Heart left ventricle (tissue), 16 donors: ENCODE measurements at regions of chr19 and their contacts with region 1.

Region 1: GRCh38 chr19:48506138-48506733 is 5.4 kb downstream of the LMTK3 start:
- DNase-seq: no peak
- ATAC-seq: peak in 1 of 4 donors; percentile 17
- H3K4me3 ChIP-seq: no peak overlapping the region
- H3K27ac ChIP-seq: no peak overlapping the region
- H3K4me1 ChIP-seq: peaks cover 0 to 14% (median 3%) of the 10 kb centered on the region in 12 donors
- H3K27me3 ChIP-seq: peaks cover 4 to 34% (median 15%) of the 10 kb centered on the region in 9 donors
- CTCF ChIP-seq: peak; percentile 9 to 47 (median 33)
- POLR2A ChIP-seq: no peak

Region 2: DNA sequence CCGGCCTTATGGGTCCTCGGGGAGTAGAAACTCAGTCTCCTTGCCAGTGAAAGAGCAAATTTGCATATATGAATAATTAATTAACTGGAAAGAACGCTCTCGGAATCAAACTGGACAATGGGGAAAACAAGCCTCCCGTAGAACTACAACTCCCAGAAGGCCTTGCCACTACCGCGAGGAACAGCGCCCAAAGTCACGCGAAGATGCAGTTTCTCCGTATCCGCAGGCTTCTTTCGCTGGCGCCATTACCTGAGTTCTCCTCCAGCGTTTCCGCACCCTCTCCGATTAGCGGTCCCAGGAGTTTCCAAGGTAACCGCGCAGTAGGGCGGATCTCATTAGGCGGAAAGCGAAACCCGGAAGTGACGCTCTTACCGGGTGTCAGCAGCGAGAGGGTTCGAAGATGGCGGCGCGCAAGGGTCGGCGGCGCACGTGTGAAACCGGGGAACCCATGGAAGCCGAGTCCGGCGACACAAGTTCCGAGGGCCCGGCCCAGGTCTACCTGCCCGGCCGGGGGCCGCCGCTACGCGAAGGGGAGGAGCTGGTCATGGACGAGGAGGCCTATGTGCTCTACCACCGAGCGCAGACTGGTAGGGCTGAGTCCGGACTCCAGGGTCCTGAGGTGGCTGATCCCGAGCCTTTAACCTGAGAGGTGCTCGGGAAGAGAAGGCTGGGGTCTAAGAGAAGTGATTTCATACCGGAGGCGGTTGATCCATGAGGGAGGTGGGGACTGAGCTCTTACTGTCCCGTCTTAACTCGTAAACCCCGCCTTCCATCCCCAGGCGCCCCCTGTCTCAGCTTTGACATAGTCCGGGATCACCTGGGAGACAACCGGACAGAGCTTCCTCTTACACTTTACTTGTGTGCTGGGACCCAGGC is 60.4 kb before region 1 on chr19 and contains the start of gene GRWD1:
- intact Hi-C with region 1: no loop called
- DNase-seq: peak; percentile 88 to 93 (median 91)
- ATAC-seq: peak; percentile 88 to 95 (median 91)
- H3K4me3 ChIP-seq: peak within 1 kb of the TSS; percentile 60 to 98 (median 89)
- H3K27ac ChIP-seq: peak within 1 kb of the TSS; percentile 12 to 94 (median 88)
- H3K4me1 ChIP-seq: peaks cover 0 to 27% (median 19%) of the 10 kb centered on the region in 12 donors
- H3K27me3 ChIP-seq: peaks cover 4 to 28% (median 15%) of the 10 kb centered on the region in 9 donors
- CTCF ChIP-seq: peak in 2 of 12 donors; percentile 3 to 7
- POLR2A ChIP-seq: peak in 1 of 2 donors; percentile 47
- total RNA-seq, gene GRWD1: 13.9 to 24.7 (median 19.0) TPM

Region 3: GRCh38 chr19:48466561-48467335 is 39.5 kb before region 1 on chr19:
- intact Hi-C with region 1: no loop called
- DNase-seq: peak in 1 of 5 donors; percentile 47
- ATAC-seq: no peak
- H3K4me3 ChIP-seq: no peak overlapping the region
- H3K27ac ChIP-seq: no peak overlapping the region
- H3K4me1 ChIP-seq: peaks cover 2 to 25% (median 16%) of the 10 kb centered on the region in 12 donors
- H3K27me3 ChIP-seq: no peaks in the 10 kb centered on the region
- CTCF ChIP-seq: no peak
- POLR2A ChIP-seq: no peak

Region 4: GRCh38 chr19:48569814-48570213 is 63.6 kb after region 1 on chr19:
- intact Hi-C with region 1: loop called in 1 of 10 experiments (anchors 5 kb)
- DNase-seq: no peak
- ATAC-seq: no peak
- H3K4me3 ChIP-seq: no peak overlapping the region
- H3K27ac ChIP-seq: no peak overlapping the region
- H3K4me1 ChIP-seq: peaks cover 0 to 15% (median 8%) of the 10 kb centered on the region in 12 donors
- H3K27me3 ChIP-seq: no peaks in the 10 kb centered on the region
- CTCF ChIP-seq: no peak
- POLR2A ChIP-seq: no peak